CD4-positive, alpha-beta T cell (primary cell): ENCODE measurements at regions of chr9 and their contacts with region 1.

Region 1: GRCh38 chr9:112486221-112487007 is at the start of gene KIAA1958:
- DNase-seq: peak; percentile 54 to 92 (median 76)
- ATAC-seq: peak; percentile 72
- H3K4me3 ChIP-seq: peak within 1 kb of the TSS; percentile 69
- H3K4me3 Mint-ChIP-seq: peak within 1 kb of the TSS; percentile 97
- H3K27ac ChIP-seq: peak within 1 kb of the TSS; percentile 44 to 62
- H3K27ac Mint-ChIP-seq: peak within 1 kb of the TSS; percentile 86
- H3K4me1 ChIP-seq: peaks cover 18% of the 10 kb centered on the region
- H3K4me1 Mint-ChIP-seq: peaks cover 45% of the 10 kb centered on the region
- H3K27me3 ChIP-seq: no peaks in the 10 kb centered on the region
- H3K27me3 Mint-ChIP-seq: no peaks in the 10 kb centered on the region
- CTCF ChIP-seq: no peak
- total RNA-seq, gene KIAA1958: 5.6 to 6.8 TPM

Region 2: DNA sequence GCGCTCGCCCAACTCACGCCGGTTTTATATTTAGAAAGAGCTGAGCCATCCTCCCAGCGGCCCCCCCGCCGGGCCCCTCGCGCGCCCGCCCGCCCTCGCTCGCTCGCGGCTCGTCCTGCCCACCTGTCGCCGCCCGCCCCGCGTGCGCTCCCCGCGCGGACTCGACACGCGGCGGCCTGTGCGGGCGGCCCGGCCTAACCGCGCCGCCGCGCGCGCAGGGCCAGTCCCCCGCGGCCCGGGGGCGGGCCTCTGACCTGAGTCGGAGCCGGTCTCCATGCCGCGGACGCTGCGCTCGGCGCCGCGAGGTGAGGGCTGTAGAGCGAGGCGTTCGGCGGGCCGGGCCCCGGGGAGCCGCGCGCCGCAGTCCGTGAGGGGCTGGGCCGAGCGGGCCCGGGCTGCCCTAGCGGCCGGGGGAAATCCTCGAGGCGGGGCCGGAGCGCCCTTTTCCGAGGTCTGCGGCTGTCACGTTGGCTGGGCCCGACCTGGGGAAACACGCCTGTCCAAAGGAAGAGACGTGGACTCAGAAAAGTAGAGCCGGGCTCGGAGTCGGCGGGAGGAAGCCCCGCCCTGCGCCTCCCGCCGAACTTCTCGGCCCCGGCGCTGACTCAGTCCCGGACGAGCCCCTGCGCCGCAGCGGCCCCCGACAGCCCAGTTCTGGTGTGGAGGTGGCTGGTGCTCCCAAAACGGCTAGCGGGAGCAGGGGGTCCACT is 1002.4 kb before region 1 on chr9 and contains the start of gene ECPAS:
- CTCF ChIA-PET with region 1: no interaction called
- POLR2A ChIA-PET with region 1: interaction called, 3 read pairs
- intact Hi-C with region 1: loop called in 1 of 2 experiments (anchors 10 kb)
- DNase-seq: peak; percentile 27 to 83 (median 48)
- ATAC-seq: peak; percentile 60
- H3K4me3 ChIP-seq: peak within 1 kb of the TSS; percentile 95
- H3K4me3 Mint-ChIP-seq: peak within 1 kb of the TSS; percentile 86
- H3K27ac ChIP-seq: peak within 1 kb of the TSS; percentile 62 to 78
- H3K27ac Mint-ChIP-seq: peak within 1 kb of the TSS; percentile 83
- H3K4me1 ChIP-seq: peaks cover 12% of the 10 kb centered on the region
- H3K4me1 Mint-ChIP-seq: peaks cover 26% of the 10 kb centered on the region
- H3K27me3 ChIP-seq: no peaks in the 10 kb centered on the region
- H3K27me3 Mint-ChIP-seq: no peaks in the 10 kb centered on the region
- CTCF ChIP-seq: no peak
- total RNA-seq, gene ECPAS: 36.6 to 37.5 TPM

Region 3: DNA sequence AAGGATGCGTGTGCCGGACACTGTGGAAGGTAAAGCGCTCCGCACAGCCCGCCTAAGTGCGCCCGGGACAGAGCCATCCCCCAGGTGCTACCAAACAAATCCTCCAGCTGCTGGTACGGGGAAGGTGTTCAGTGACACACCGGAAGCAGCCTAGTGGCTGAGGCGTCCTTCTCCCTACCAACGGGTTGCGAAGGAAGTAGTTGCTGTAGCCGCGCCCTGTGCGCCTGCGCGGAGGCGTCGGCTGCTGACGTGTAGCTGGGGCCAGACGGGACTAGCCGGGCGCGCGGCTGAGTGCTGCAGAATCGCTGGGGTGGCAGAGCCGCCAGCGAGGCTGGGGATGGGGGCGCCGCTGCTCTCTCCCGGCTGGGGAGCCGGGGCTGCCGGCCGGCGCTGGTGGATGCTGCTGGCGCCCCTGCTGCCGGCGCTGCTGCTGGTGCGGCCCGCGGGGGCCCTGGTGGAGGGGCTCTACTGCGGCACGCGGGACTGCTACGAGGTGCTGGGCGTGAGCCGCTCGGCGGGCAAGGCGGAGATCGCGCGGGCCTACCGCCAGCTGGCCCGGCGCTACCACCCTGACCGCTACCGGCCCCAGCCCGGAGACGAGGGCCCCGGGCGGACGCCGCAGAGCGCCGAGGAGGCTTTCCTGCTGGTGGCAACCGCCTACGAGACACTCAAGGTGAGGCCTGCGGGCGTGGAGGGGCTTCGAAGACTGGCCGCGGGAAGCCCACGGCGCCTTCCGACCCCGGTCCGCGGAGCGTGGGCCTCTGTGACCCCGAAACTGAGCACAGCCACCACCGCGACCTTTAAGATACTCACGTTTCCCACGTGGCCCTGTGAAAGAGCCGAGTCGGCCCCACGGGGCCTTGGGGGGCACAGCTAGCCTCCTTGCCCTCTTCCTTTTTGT is 855.1 kb before region 1 on chr9 and contains the start of gene DNAJC25:
- CTCF ChIA-PET with region 1: no interaction called
- POLR2A ChIA-PET with region 1: interaction called, 4 read pairs
- intact Hi-C with region 1: loop called in 1 of 2 experiments (anchors 10 kb)
- DNase-seq: peak; percentile 91 to 100 (median 96)
- ATAC-seq: peak; percentile 92
- H3K4me3 ChIP-seq: peak within 1 kb of the TSS; percentile 74
- H3K4me3 Mint-ChIP-seq: peak within 1 kb of the TSS; percentile 99
- H3K27ac ChIP-seq: peak within 1 kb of the TSS; percentile 3 to 75
- H3K27ac Mint-ChIP-seq: peak within 1 kb of the TSS; percentile 90
- H3K4me1 ChIP-seq: peaks cover 18% of the 10 kb centered on the region
- H3K4me1 Mint-ChIP-seq: peaks cover 58% of the 10 kb centered on the region
- H3K27me3 ChIP-seq: no peaks in the 10 kb centered on the region
- H3K27me3 Mint-ChIP-seq: no peaks in the 10 kb centered on the region
- CTCF ChIP-seq: no peak
- total RNA-seq, gene DNAJC25: 4.5 to 4.8 TPM

Region 4: GRCh38 chr9:111661150-111661801 is 825.1 kb before region 1 on chr9 and contains the start of gene GNG10:
- CTCF ChIA-PET with region 1: no interaction called
- POLR2A ChIA-PET with region 1: interaction called, 3 read pairs
- intact Hi-C with region 1: loop called in 1 of 2 experiments (anchors 10 kb)
- DNase-seq: peak; percentile 34 to 84 (median 65)
- ATAC-seq: peak; percentile 91
- H3K4me3 ChIP-seq: peak within 1 kb of the TSS; percentile 76
- H3K4me3 Mint-ChIP-seq: peak within 1 kb of the TSS; percentile 91
- H3K27ac ChIP-seq: peak within 1 kb of the TSS; percentile 61 to 64
- H3K27ac Mint-ChIP-seq: peak within 1 kb of the TSS; percentile 78
- H3K4me1 ChIP-seq: peaks cover 37% of the 10 kb centered on the region
- H3K4me1 Mint-ChIP-seq: peaks cover 44% of the 10 kb centered on the region
- H3K27me3 ChIP-seq: no peaks in the 10 kb centered on the region
- H3K27me3 Mint-ChIP-seq: no peaks in the 10 kb centered on the region
- CTCF ChIP-seq: no peak
- total RNA-seq, gene GNG10: 2.8 to 3.0 TPM

Region 5: GRCh38 chr9:112379177-112380101 is 107.0 kb before region 1 on chr9:
- CTCF ChIA-PET with region 1: no interaction called
- POLR2A ChIA-PET with region 1: interaction called, 18 read pairs
- intact Hi-C with region 1: loop called in 1 of 2 experiments (anchors 1 kb)
- DNase-seq: peak; percentile 94 to 100 (median 98)
- ATAC-seq: peak; percentile 96
- H3K4me3 ChIP-seq: peak overlapping the region; percentile 98
- H3K4me3 Mint-ChIP-seq: peak overlapping the region; percentile 100
- H3K27ac ChIP-seq: peak overlapping the region; percentile 89 to 94
- H3K27ac Mint-ChIP-seq: peak overlapping the region; percentile 98
- H3K4me1 ChIP-seq: peaks cover 17% of the 10 kb centered on the region
- H3K4me1 Mint-ChIP-seq: peaks cover 64% of the 10 kb centered on the region
- H3K27me3 ChIP-seq: no peaks in the 10 kb centered on the region
- H3K27me3 Mint-ChIP-seq: no peaks in the 10 kb centered on the region
- CTCF ChIP-seq: no peak

Region 6: GRCh38 chr9:112421771-112422222 is 64.6 kb before region 1 on chr9:
- CTCF ChIA-PET with region 1: no interaction called
- POLR2A ChIA-PET with region 1: no interaction called
- intact Hi-C with region 1: no loop called
- DNase-seq: no peak
- ATAC-seq: no peak
- H3K4me3 ChIP-seq: no peak overlapping the region
- H3K4me3 Mint-ChIP-seq: no peak overlapping the region
- H3K27ac ChIP-seq: no peak overlapping the region
- H3K27ac Mint-ChIP-seq: no peak overlapping the region
- H3K4me1 ChIP-seq: no peaks in the 10 kb centered on the region
- H3K4me1 Mint-ChIP-seq: no peaks in the 10 kb centered on the region
- H3K27me3 ChIP-seq: no peaks in the 10 kb centered on the region
- H3K27me3 Mint-ChIP-seq: no peaks in the 10 kb centered on the region
- CTCF ChIP-seq: no peak

Region 7: DNA sequence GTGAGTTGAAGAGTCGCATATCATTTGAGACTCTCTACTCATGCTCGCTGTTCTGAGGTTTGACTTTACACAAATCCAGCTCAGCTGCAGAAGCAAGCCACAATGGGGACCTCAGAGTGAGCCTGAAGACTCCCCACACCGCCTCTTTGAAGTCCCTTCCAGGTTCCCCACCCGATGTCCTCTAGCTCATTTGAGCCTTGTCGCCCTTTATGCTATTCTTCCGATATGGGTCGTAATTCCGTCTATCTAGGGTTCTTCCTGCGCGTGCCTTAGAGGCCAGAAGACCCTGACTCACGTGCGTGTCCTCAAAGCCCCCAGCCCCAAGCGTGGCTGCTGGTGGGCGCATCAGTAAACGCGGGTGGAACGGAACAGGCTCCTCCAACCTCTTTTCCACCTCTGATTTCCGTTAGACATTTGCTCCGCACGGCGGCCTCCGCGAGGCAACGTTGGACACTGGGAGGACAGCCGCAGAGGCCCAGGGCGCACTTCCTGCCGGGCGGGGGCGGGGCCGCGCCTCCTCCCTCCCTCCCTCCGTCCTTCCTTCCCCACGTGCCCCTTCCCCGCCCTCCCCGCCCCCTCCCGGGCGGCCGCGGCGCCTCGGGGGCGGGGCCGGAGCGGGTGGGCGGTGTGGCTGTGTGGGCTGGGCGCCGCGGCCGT is 263.8 kb after region 1 on chr9 and contains the start of gene SNX30:
- CTCF ChIA-PET with region 1: no interaction called
- POLR2A ChIA-PET with region 1: interaction called, 8 read pairs
- intact Hi-C with region 1: loop called in 1 of 2 experiments (anchors 2 kb)
- DNase-seq: peak; percentile 49 to 92 (median 78)
- ATAC-seq: peak; percentile 65
- H3K4me3 ChIP-seq: peak within 1 kb of the TSS; percentile 81
- H3K4me3 Mint-ChIP-seq: peak within 1 kb of the TSS; percentile 91
- H3K27ac ChIP-seq: peak within 1 kb of the TSS; percentile 60 to 79
- H3K27ac Mint-ChIP-seq: peak within 1 kb of the TSS; percentile 81
- H3K4me1 ChIP-seq: peaks cover 55% of the 10 kb centered on the region
- H3K4me1 Mint-ChIP-seq: peaks cover 59% of the 10 kb centered on the region
- H3K27me3 ChIP-seq: no peaks in the 10 kb centered on the region
- H3K27me3 Mint-ChIP-seq: no peaks in the 10 kb centered on the region
- CTCF ChIP-seq: no peak
- total RNA-seq, gene SNX30: 5.2 to 5.8 TPM